Heart left ventricle (tissue), 16 donors: ENCODE measurements at regions of chr13 and their contacts with region 1.

Region 1: DNA sequence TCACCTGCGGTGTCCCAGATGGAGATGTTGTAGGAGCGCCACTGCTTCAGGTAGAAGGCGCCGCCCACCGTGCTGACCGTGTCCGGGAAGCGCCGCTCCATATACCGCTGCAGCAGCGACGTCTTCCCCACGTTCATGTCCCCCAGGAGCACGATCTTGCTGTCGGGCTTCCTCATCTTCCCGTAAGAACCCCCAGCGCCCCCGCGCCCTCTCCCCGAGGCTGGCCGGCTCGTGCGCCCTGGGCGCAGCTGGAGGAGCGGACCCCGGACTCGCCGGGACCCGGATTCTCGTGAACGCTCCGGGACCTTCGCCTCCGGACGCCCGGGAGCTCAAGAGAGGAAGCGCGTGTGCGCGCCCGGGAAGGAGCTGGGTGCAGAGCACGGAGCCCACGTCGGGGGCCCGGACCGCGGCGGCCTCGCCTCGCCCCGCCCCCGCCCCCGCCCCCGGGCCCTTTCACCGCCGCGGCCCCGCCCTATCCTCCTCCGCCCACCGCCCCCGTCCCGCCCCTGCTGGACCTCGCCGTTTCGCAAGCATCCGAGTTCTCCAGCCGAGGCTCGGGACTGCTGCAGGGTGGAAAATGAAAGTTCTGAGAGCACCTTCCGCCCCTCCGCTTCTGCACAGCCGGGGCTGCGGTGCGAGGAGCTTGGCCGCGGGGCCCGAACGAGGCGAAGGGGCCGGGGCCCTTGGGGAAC is at the start of gene RAB20:
- DNase-seq: peak; percentile 91 to 94 (median 92)
- ATAC-seq: peak; percentile 79 to 87 (median 86)
- H3K4me3 ChIP-seq: peak within 1 kb of the TSS; percentile 68 to 96 (median 82)
- H3K27ac ChIP-seq: peak within 1 kb of the TSS; percentile 83 to 97 (median 94)
- H3K4me1 ChIP-seq: peaks cover 0 to 40% (median 19%) of the 10 kb centered on the region in 12 donors
- H3K27me3 ChIP-seq: no peaks in the 10 kb centered on the region
- CTCF ChIP-seq: no peak
- POLR2A ChIP-seq: peak in 1 of 2 donors; percentile 46
- total RNA-seq, gene RAB20: 5.5 to 30.2 (median 13.7) TPM

Region 2: DNA sequence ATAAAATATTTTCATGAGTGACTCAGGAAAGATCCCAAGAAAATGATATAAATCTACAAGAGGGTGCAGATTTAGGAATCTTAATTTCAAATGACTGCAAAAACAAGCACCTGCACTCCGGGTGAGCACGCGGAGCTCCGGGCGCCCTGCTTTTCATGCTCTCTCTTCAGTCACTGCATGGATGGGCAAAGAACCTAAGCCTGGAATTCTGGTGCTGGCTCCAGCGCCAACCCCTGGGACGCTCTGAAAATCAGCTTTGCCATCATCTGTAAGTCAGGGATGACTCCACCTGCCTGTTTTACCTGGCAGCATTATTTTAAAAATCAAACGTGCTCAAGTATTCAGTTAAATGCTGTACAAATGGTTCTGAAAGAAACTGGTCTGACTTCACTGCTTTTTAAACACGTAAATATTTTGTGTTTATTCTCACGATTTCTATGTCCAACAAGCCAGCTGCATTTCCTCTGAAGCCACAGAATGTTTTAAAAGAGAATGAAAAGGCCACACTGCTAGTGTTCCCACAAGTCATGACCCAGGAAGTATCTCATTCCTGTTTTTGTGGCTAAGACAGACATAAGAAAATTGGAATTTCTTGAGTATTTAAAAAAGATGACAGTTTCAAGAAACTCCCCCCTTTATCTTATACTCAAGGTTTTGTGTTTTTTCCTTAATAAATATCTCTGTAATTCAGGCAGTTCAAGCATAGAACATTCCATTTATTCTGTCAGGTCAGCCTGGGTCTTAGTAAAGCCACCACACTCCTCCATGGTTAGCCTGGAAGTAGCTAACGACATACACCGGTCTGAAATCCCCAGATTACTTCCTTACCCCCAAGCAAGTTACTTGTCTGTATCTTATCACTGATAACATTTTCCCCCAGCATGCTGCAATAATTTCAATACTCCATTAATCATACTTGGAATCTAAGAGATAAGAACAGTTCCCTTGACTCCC is 335.6 kb before region 1 on chr13:
- intact Hi-C with region 1: loop called in 2 of 10 experiments (anchors 5 to 10 kb)
- DNase-seq: no peak
- ATAC-seq: no peak
- H3K4me3 ChIP-seq: no peak overlapping the region
- H3K27ac ChIP-seq: peak overlapping the region in 11 of 12 donors; percentile 8 to 88 (median 39)
- H3K4me1 ChIP-seq: peaks cover 9 to 79% (median 56%) of the 10 kb centered on the region in 12 donors
- H3K27me3 ChIP-seq: no peaks in the 10 kb centered on the region
- CTCF ChIP-seq: no peak
- POLR2A ChIP-seq: no peak

Region 3: GRCh38 chr13:110340812-110341444 is 220.6 kb before region 1 on chr13:
- intact Hi-C with region 1: no loop called
- DNase-seq: peak; percentile 82 to 93 (median 86)
- ATAC-seq: peak; percentile 57 to 78 (median 71)
- H3K4me3 ChIP-seq: peak overlapping the region in 9 of 12 donors; percentile 1 to 32 (median 16)
- H3K27ac ChIP-seq: peak overlapping the region; percentile 74 to 96 (median 90)
- H3K4me1 ChIP-seq: peaks cover 29 to 81% (median 70%) of the 10 kb centered on the region in 12 donors
- H3K27me3 ChIP-seq: no peaks in the 10 kb centered on the region
- CTCF ChIP-seq: peak in 2 of 12 donors; percentile 7 to 19
- POLR2A ChIP-seq: no peak

Region 4: GRCh38 chr13:110455941-110456340 is 105.5 kb before region 1 on chr13:
- intact Hi-C with region 1: loop called in 6 of 10 experiments (anchors 1 to 10 kb)
- DNase-seq: peak; percentile 69 to 86 (median 82)
- ATAC-seq: peak; percentile 62 to 89 (median 84)
- H3K4me3 ChIP-seq: no peak overlapping the region
- H3K27ac ChIP-seq: peak overlapping the region in 2 of 12 donors; percentile 17 to 33
- H3K4me1 ChIP-seq: peaks cover 0 to 15% (median 1%) of the 10 kb centered on the region in 12 donors
- H3K27me3 ChIP-seq: no peaks in the 10 kb centered on the region
- CTCF ChIP-seq: peak; percentile 56 to 89 (median 75)
- POLR2A ChIP-seq: no peak

Region 5: DNA sequence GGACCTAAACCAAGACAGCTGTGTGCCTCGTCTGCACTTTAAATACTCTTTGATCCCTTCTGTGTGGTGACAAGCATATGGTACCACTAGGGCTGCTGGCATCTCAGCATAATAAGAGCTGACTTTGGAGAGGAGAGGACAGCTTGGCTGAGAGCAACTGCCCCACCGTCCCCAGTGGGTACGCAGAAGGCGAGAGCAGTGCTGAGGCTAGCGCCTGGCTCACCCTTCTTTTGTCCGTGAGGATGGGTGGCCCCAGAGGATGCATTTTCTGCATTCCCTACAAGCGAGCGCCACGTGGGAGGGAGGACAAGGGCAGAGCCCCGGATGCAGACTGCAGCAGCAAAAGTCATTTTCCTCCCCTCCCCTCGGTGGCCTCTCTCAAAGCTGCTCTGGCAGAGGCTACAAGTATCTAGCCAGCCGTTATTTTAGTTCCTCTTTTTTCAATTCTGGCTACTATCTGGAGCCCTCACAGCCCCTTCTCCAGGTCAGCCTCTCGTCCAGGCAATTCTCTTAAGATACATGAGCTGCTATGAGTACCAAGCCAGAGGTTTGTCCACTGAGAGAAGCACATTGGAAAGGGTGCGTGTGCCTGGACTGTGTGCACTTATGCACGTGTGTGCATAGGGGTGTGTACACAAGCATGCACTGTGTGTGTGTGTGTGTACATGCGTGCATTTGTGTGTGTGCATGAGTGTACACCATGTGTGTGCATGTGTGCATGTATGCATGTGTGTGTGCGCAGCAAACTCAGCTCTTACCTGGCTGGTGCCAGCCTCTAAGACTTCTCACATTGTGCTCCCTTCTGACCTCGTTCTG is 51.3 kb before region 1 on chr13:
- intact Hi-C with region 1: loop called in 7 of 10 experiments (anchors 2 to 10 kb)
- DNase-seq: peak in 4 of 5 donors; percentile 47 to 68 (median 64)
- ATAC-seq: peak in 3 of 4 donors; percentile 13 to 24 (median 20)
- H3K4me3 ChIP-seq: no peak overlapping the region
- H3K27ac ChIP-seq: peak overlapping the region; percentile 36 to 97 (median 86)
- H3K4me1 ChIP-seq: peaks cover 0 to 53% (median 28%) of the 10 kb centered on the region in 12 donors
- H3K27me3 ChIP-seq: no peaks in the 10 kb centered on the region
- CTCF ChIP-seq: no peak
- POLR2A ChIP-seq: no peak

Region 6: GRCh38 chr13:111973605-111974340 is 1412.3 kb after region 1 on chr13:
- intact Hi-C with region 1: no loop called
- DNase-seq: no peak
- ATAC-seq: peak in 3 of 4 donors; percentile 40 to 68 (median 46)
- H3K4me3 ChIP-seq: no peak overlapping the region
- H3K27ac ChIP-seq: no peak overlapping the region
- H3K4me1 ChIP-seq: peaks cover 0 to 14% (median 0%) of the 10 kb centered on the region in 12 donors
- H3K27me3 ChIP-seq: peaks cover 0 to 52% (median 19%) of the 10 kb centered on the region in 9 donors
- CTCF ChIP-seq: no peak
- POLR2A ChIP-seq: no peak